HepG2 (cell line): ENCODE measurements at regions of chr22 and their contacts with region 1.

Region 1: GRCh38 chr22:46563381-46564083 is 26.1 kb upstream of the CELSR1 start:
- DNase-seq: peak; percentile 64
- ATAC-seq: peak; percentile 95
- H3K4me3 ChIP-seq: peak overlapping the region; percentile 41 to 76 (median 58); a peak in 5 of 6 replicates
- H3K27ac ChIP-seq: peak overlapping the region; percentile 59
- H3K4me1 ChIP-seq: peaks cover 27% of the 10 kb centered on the region
- H3K27me3 ChIP-seq: no peaks in the 10 kb centered on the region
- CTCF ChIP-seq: peak; percentile 86
- EP300 ChIP-seq: no peak
- POLR2A ChIP-seq: no peak
- RAD21 ChIP-seq: peak; percentile 86

Region 2: DNA sequence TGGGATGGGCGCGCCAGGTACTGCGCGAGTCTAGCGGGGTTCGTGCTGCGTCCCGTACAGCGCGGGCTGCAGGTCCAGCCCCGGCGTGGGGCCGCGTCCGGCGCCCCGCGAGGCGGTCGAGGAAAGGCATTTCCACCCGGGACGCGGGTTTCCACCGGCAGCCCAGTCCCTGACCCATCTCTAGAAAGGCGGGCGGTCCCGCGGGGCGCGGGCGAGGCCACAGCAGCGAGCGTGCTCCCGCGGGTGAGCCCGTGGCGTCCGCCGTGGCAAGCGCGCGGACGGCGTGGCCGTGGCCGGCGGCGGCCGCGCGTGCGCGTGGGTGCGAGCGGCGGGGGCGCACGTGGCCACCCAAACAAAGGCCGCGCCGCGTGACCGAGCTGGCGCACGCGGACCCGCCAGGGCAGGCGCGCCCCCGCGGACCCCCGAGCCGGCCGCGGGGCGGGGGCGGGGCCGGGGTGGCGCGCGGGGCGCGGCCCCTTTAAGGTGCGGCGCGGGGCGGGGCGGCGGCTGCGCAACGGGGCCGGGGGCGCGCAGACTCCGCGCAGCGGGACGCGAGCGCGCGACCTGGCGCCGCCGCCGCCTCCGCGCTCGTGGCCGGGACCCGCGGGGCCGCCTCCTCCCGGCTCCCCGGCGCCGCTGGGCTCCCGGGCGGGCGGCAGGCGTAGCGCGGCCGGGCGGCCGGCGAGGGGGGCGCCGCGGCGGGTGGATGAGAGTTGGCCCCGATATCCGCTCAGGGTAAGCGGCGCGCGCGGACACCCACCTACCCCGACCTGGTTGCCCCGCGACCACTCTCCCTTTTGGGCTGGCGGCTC is 13.2 kb after region 1 on chr22:
- CTCF ChIA-PET with region 1: no interaction called
- POLR2A ChIA-PET with region 1: interaction called, 21 read pairs
- in situ Hi-C with region 1: no loop called
- intact Hi-C with region 1: no loop called
- DNase-seq: no peak
- ATAC-seq: no peak
- H3K4me3 ChIP-seq: peak overlapping the region in 2 of 3 experiments; percentile 63 to 80; a peak in 4 of 6 replicates
- H3K27ac ChIP-seq: no peak overlapping the region
- H3K4me1 ChIP-seq: peaks cover 75% of the 10 kb centered on the region
- H3K27me3 ChIP-seq: peaks cover 0 to 11% of the 10 kb centered on the region in 2 experiments; a peak in 2 of 5 replicates
- CTCF ChIP-seq: no peak
- EP300 ChIP-seq: no peak
- POLR2A ChIP-seq: no peak
- RAD21 ChIP-seq: no peak

Region 3: DNA sequence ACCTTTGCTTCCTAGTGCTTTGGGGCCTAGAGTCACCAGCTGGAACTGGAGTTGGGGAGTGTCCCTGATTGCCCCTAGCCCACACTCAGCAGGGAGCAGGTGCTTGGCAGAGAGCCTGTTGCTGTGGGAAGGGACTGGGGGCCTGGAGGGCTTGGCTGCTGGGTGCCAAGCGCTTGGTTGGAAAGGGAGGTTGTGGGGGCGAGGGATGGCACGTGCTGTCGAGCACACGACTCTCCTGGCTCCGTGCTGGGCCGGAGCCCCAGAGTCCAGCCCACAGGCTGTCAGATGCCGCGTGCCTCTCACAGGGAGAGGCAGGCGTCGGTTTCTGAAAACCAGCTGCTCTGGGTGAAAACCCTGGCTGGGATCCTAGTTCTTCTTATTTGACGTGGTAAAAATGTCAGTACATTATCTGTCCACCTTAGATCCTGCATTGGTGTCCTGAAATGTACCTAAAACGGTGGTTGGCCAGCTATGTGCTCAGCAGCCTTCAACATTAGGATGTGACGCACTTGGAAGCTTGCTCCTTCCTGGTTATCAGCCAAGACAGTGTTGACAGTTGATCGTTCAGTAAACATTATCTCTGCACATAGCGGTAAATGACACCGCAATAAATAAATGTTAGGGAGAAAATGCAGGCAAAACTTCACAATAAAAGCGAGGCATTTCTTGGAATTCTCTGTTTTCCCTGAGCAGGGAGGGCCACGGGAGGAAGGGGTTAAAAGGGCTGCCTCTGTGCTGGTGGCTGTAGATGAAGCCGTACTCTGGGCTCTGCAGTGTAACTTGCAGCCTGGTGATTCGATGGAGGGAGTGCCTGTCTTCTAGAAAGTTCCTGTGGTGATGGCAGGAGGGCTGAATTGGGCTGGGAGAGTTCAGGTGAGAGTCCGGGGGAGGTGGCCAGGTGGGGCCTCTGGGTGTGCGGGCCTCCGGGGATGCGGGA is 85.9 kb after region 1 on chr22:
- CTCF ChIA-PET with region 1: no interaction called
- POLR2A ChIA-PET with region 1: interaction called, 11 read pairs
- in situ Hi-C with region 1: loop called (anchors 25 kb)
- intact Hi-C with region 1: no loop called
- DNase-seq: no peak
- ATAC-seq: no peak
- H3K4me3 ChIP-seq: no peak overlapping the region
- H3K27ac ChIP-seq: no peak overlapping the region
- H3K4me1 ChIP-seq: peaks cover 68% of the 10 kb centered on the region
- H3K27me3 ChIP-seq: no peaks in the 10 kb centered on the region
- CTCF ChIP-seq: no peak
- EP300 ChIP-seq: no peak
- POLR2A ChIP-seq: no peak
- RAD21 ChIP-seq: no peak

Region 4: DNA sequence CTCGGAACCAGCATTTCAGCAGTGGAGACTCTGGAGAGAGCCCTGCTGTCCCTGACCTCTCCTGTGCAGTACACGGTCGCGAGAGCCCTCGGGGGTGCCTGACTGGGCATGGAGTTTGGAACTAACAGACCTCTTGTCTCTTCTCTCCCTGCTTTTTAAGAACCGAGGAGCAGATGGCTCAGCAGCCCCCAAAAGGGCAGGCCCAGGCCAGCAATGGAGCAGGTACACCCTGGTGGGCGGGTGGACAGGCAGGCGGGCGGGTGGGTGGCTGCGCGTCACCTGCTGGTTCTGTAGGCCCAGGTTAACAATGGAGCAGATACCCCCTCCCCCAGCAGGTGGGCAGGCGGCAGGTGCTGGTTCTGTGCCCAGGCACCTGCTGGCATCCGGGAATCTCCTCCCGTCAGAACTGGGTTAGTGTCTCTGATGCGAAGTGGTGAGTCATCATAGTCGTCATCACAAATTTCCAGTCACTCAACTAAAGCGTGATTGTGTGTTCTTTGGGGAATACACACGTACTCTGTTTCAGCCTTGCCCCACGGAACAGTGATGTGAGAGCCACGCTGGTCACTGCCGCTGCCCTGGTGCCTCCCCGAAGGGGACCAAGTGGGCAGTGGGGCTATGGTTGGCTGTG is 97.8 kb after region 1 on chr22:
- CTCF ChIA-PET with region 1: interaction called, 13 read pairs
- POLR2A ChIA-PET with region 1: no interaction called
- in situ Hi-C with region 1: loop called (anchors 25 kb)
- intact Hi-C with region 1: loop called (anchors 1 kb)
- DNase-seq: no peak
- ATAC-seq: no peak
- H3K4me3 ChIP-seq: no peak overlapping the region
- H3K27ac ChIP-seq: no peak overlapping the region
- H3K4me1 ChIP-seq: peaks cover 26% of the 10 kb centered on the region
- H3K27me3 ChIP-seq: no peaks in the 10 kb centered on the region; a peak in 1 of 5 replicates
- CTCF ChIP-seq: no peak
- EP300 ChIP-seq: no peak
- POLR2A ChIP-seq: no peak
- RAD21 ChIP-seq: no peak